Endothelial cell of umbilical vein (primary cell): ENCODE measurements at regions of chr5 and their contacts with region 1.

Region 1: GRCh38 chr5:159198063-159199036 is 11.0 kb downstream of the RNF145 start:
- DNase-seq: no peak
- H3K4me3 ChIP-seq: no peak overlapping the region
- H3K27ac ChIP-seq: no peak overlapping the region
- H3K4me1 ChIP-seq: no peaks in the 10 kb centered on the region
- H3K27me3 ChIP-seq: no peaks in the 10 kb centered on the region
- CTCF ChIP-seq: no peak
- POLR2A ChIP-seq: no peak

Region 2: DNA sequence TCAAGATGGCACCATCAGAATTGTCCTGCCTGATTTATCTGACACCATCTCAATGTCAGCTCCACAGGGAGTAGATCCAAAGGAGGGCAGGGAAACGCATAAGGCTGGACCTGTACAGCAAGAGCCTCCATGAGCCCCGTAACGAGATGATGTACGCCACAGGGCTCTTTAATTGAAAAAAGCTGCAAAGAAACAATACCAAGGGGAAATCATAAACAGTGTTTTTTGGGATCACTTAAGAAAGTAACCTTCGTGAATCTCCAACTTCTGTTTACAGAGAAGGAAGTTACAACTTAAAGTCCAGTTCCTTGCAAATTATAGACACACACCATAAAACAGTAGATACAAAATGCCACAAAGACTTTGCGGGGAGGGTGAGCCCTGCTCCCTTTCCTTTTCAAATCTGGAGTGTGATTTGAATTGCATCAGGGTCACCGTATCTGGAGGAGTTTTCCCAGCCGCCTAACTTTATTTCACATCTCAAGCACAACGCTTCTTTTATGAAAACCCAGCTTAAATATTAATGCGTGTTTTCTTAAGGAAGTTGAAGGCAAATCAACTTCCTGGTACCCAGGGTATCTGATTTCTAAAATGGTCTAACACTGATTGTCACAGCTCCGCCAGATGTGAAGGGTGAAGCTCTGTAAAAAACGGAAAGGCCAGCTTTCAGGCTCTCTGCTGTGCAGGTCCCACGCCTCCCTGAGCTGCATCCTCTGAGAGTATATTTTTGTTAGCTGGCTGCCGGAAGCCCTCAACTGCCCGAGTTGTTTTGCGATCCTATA is 187.5 kb before region 1 on chr5:
- CTCF ChIA-PET with region 1: no interaction called
- POLR2A ChIA-PET with region 1: no interaction called
- dilution Hi-C with region 1: no loop called
- intact Hi-C with region 1: no loop called
- DNase-seq: peak; percentile 22
- H3K4me3 ChIP-seq: peak overlapping the region in 1 of 3 experiments; percentile 5
- H3K27ac ChIP-seq: no peak overlapping the region
- H3K4me1 ChIP-seq: peaks cover 12% of the 10 kb centered on the region
- H3K27me3 ChIP-seq: peaks cover 2 to 6% of the 10 kb centered on the region in 2 experiments
- CTCF ChIP-seq: no peak
- POLR2A ChIP-seq: no peak

Region 3: GRCh38 chr5:159184858-159185381 is 13.4 kb before region 1 on chr5:
- CTCF ChIA-PET with region 1: interaction called, 10 read pairs
- POLR2A ChIA-PET with region 1: no interaction called
- dilution Hi-C with region 1: no loop called
- intact Hi-C with region 1: no loop called
- DNase-seq: peak; percentile 19
- H3K4me3 ChIP-seq: no peak overlapping the region
- H3K27ac ChIP-seq: no peak overlapping the region
- H3K4me1 ChIP-seq: peaks cover 12% of the 10 kb centered on the region
- H3K27me3 ChIP-seq: no peaks in the 10 kb centered on the region
- CTCF ChIP-seq: no peak
- POLR2A ChIP-seq: no peak

Region 4: DNA sequence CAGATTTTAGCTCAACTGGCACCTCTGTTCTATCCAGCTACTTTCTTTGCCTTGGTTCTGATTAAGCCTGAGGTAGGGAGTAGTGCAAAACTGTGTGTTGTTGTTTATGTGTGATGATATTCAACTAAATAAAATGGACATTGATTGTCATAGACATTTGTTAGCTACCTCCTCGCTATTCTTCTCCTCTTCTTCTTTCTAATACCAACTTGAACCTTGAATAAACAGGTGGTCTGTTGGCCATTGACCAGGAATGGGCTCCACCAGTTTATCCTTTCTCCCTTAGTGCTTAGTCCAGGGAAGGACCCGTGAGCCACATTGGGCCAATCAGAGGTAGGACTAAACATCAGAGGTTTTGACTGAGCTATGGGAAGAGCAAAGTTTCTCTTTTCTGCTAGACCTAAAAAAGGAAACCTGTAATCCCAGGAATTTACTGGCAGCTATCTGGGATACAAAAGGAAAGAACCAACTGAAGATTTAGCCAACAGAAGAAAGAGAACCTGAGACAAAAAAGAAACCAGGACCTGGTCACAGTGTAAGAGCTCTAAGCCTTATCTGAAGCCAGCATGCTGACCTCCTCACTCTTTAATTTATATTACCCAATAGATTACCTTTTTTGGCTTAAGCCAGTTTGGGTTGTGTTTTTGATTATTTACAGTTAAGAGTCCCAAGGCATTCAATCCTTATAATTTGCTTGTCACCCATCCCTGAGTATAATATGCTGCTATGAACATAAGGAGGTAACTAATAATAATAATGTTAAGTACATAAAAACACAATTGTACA is 16.3 kb after region 1 on chr5:
- CTCF ChIA-PET with region 1: no interaction called
- POLR2A ChIA-PET with region 1: no interaction called
- dilution Hi-C with region 1: no loop called
- intact Hi-C with region 1: no loop called
- DNase-seq: no peak
- H3K4me3 ChIP-seq: no peak overlapping the region
- H3K27ac ChIP-seq: no peak overlapping the region
- H3K4me1 ChIP-seq: peaks cover 2% of the 10 kb centered on the region
- H3K27me3 ChIP-seq: peaks cover 0 to 6% of the 10 kb centered on the region in 2 experiments
- CTCF ChIP-seq: no peak
- POLR2A ChIP-seq: no peak